Heart left ventricle (tissue), 16 donors: ENCODE measurements at regions of chr1 and their contacts with region 1.

Region 1: DNA sequence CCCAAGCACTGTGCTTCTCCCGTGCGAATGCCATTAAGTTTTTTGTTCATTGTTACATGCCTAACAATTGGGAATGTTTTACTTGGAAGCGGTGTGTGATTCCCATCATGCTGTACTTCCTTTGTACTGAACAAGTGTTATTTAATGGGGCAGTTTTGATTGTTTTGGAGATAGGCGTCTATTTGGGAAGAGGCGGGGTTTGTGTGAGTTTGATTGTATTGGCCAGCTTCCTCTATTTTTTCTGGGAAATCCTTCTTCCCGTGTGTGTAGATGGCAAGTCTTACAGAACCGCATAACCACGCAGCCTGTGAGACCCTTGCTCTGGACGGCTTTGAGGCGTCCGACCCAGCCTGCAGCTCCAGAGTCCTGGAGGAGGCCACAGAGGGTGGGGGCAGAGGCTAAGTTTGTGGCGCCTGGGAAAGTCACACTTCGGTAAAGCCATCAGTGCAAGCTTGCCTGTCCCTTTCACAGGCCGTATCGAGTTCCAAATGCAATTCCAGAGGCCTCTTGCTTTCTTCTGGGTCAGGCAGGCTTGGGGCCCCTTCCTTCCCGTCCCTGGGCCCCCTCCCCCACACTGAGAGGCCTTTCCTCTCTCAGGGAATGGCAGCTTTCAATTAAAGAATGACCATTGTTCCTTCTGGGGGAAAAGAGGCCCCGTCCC is 210.3 kb downstream of the TOMM20 start:
- DNase-seq: peak in 4 of 5 donors; percentile 55 to 72 (median 69)
- ATAC-seq: peak; percentile 30 to 68 (median 47)
- H3K4me3 ChIP-seq: no peak overlapping the region
- H3K27ac ChIP-seq: peak overlapping the region; percentile 81 to 93 (median 87)
- H3K4me1 ChIP-seq: peaks cover 21 to 82% (median 71%) of the 10 kb centered on the region in 12 donors
- H3K27me3 ChIP-seq: no peaks in the 10 kb centered on the region
- CTCF ChIP-seq: no peak
- POLR2A ChIP-seq: no peak

Region 2: GRCh38 chr1:234533975-234534876 is 384.1 kb before region 1 on chr1:
- intact Hi-C with region 1: loop called in 1 of 10 experiments (anchors 10 kb)
- DNase-seq: peak; percentile 93 to 97 (median 94)
- ATAC-seq: peak; percentile 7 to 19 (median 16)
- H3K4me3 ChIP-seq: peak overlapping the region in 1 of 12 donors; percentile 13
- H3K27ac ChIP-seq: peak overlapping the region; percentile 91 to 99 (median 98)
- H3K4me1 ChIP-seq: peaks cover 35 to 100% (median 98%) of the 10 kb centered on the region in 12 donors
- H3K27me3 ChIP-seq: no peaks in the 10 kb centered on the region
- CTCF ChIP-seq: no peak
- POLR2A ChIP-seq: no peak

Region 3: GRCh38 chr1:234851450-234852438 is 66.6 kb before region 1 on chr1:
- intact Hi-C with region 1: no loop called
- DNase-seq: peak in 1 of 5 donors; percentile 46
- ATAC-seq: peak; percentile 31 to 76 (median 44)
- H3K4me3 ChIP-seq: no peak overlapping the region
- H3K27ac ChIP-seq: peak overlapping the region in 1 of 12 donors; percentile 63
- H3K4me1 ChIP-seq: peaks cover 0 to 53% (median 0%) of the 10 kb centered on the region in 12 donors
- H3K27me3 ChIP-seq: no peaks in the 10 kb centered on the region
- CTCF ChIP-seq: no peak
- POLR2A ChIP-seq: no peak

Region 4: GRCh38 chr1:234862944-234863515 is 55.3 kb before region 1 on chr1:
- intact Hi-C with region 1: loop called in 1 of 10 experiments (anchors 5 kb)
- DNase-seq: peak; percentile 79 to 88 (median 85)
- ATAC-seq: peak; percentile 62 to 79 (median 73)
- H3K4me3 ChIP-seq: peak overlapping the region in 5 of 12 donors; percentile 1 to 27 (median 8)
- H3K27ac ChIP-seq: peak overlapping the region; percentile 63 to 82 (median 77)
- H3K4me1 ChIP-seq: peaks cover 0 to 46% (median 32%) of the 10 kb centered on the region in 12 donors
- H3K27me3 ChIP-seq: no peaks in the 10 kb centered on the region
- CTCF ChIP-seq: no peak
- POLR2A ChIP-seq: no peak

Region 5: GRCh38 chr1:234970731-234971476 is 52.6 kb after region 1 on chr1:
- intact Hi-C with region 1: loop called in 1 of 10 experiments (anchors 5 kb)
- DNase-seq: peak in 4 of 5 donors; percentile 74 to 84 (median 76)
- ATAC-seq: peak; percentile 75 to 80 (median 78)
- H3K4me3 ChIP-seq: peak overlapping the region in 4 of 12 donors; percentile 40 to 46 (median 44)
- H3K27ac ChIP-seq: peak overlapping the region; percentile 67 to 94 (median 83)
- H3K4me1 ChIP-seq: peaks cover 0 to 64% (median 32%) of the 10 kb centered on the region in 12 donors
- H3K27me3 ChIP-seq: no peaks in the 10 kb centered on the region
- CTCF ChIP-seq: no peak
- POLR2A ChIP-seq: peak in 1 of 2 donors; percentile 18

Region 6: DNA sequence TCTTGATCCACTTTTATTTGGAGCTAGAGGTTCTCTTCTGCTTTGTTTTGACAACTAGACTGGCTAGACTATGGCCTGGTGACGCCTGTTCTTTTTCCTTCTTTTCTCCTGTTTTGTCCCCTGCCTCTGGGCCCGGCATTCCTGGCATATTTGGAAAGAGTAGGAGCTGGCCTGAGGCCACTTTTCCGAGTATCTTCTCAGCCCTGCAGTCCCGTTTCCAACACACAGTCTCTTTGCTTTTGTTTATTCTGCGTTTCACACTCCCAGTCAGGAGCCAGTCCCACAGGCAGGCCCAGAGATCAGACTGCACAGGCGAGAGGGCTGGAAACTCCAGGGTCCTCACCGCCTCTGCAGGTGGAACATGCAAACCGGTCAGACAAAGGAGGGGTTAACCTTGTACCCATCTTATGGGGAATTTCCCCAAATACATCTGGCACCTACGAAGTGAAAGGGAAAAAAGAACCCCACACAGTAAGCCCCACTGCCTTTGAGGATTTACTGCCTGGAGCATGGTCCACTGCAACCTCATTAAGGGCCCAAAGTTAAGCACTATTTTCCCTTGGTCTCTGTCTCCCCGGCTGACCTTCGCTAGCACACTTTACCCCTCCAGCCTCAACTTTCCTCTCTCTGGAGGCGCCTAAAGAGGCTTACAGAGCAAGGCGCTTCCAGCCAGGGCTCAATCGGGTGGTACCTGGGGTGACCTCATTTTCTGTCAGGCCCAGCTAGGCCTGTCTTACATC is 69.3 kb after region 1 on chr1:
- intact Hi-C with region 1: loop called in 4 of 10 experiments (anchors 5 to 10 kb)
- DNase-seq: peak in 4 of 5 donors; percentile 65 to 76 (median 76)
- ATAC-seq: peak; percentile 81 to 92 (median 88)
- H3K4me3 ChIP-seq: no peak overlapping the region
- H3K27ac ChIP-seq: peak overlapping the region; percentile 79 to 98 (median 90)
- H3K4me1 ChIP-seq: peaks cover 15 to 66% (median 35%) of the 10 kb centered on the region in 12 donors
- H3K27me3 ChIP-seq: no peaks in the 10 kb centered on the region
- CTCF ChIP-seq: no peak
- POLR2A ChIP-seq: no peak